ENCODE measurements at regions of chr12 and their contacts with region 1.

Region 1: DNA sequence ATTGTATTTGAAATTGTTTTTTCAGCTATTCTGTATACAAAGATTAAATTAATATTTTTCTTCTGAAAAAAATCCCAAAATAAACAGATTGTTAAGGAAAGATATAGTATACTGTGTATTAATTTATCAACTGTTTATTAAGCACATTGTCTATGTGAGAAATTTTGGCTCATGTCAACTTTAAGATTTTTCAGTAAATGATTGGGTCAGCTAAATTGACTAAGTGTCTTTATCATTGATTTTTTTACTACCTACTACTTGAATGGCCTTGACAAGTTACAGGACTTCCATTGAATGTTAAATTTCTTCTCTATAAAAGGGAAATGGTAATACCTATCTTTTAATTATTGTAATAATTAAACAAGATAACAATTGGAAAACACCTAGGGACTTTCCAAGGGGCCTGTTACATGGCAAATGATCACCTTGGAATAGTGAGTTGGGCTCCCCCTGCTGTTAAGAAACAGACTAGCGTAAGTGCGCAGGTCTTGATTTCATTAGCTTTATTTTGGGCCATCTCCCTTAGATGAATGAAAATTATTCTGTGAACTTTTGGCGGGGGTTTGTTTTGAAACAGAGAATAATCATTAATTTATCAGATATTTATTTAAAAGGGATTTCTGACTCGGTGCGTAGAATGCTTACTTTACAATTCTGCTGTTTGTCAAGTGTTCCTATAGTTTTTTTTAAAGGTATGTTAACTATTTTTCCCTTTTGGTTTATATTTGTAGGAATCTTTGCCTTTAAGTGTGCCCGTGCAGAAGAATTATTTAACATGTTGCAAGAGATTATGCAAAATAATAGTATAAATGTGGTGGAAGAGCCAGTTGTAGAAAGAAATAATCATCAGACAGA is 14.5 kb upstream of the CCT2 start:
- DNase-seq: peak in 36 of 42 donors; percentile 16 to 84 (median 54)

Region 2: DNA sequence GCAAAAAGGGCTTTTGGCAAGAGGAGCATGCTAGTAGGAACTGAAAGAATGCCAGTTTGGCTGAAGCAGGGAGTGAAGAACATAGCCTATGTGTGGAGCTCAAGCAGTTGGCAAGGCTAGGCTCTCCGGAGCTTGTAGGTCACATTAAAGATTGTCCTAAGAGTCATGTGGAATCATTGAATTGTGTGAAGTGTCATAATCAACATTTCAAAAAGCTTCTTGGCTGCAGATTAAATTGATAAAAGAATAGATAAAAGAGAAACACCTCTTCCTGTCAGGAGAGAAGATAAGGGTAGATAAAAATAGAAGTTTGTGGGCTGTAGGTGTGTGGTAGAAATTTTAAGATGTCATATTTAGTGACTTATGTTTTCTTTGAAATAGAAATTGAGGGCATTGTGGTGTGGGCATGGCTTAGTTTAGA is 295.3 kb before region 1 on chr12:
- intact Hi-C with region 1: no loop called
- DNase-seq: peak in 3 of 42 donors; percentile 16 to 51 (median 31)

Region 3: DNA sequence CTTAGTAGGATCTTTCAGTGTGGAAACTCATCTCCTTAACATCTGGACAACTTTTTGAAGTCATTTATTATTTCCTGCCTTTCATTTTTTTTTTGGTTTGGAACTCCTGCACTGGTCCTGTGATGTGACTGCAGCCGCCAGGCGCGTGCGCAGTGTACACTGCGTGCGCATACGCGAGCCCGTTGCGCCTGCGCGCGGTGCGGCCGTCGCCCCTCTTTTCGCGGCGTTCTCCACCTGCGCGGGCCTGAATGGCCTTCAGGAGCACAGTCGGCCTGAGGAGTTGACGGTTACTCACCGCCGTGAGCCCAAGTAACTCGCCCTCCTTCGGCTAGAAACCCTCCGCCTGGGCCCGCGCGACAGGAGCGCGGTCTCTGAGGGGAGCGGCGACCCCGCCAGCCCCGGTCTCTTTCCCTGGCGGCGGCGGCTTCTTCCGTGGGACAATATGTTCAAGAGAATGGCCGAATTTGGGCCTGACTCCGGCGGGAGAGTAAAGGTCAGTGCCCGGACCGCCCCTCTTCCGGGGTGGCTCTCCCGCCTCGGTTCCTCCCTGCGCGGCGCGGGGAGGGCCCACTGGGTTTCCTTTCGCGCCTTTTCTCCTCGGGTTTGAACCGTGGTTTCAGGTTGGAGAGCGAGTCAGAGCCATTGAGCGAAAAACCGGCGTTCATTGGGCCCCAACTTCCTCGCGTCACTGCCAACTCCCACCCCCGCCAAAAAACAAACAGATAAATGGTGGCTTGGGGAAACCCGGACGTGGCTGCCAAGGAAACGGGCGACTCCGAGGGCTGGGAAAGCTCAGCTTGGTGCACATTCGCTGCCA is 211.0 kb before region 1 on chr12 and contains the start of gene YEATS4:
- intact Hi-C with region 1: loop called (anchors 10 kb)
- DNase-seq: peak; percentile 62 to 92 (median 85)

Region 4: GRCh38 chr12:69470189-69471075 is 100.3 kb before region 1 on chr12 and contains the start of gene FRS2:
- intact Hi-C with region 1: loop called (anchors 5 kb)
- DNase-seq: peak; percentile 90 to 99 (median 97)

Measured in head of caudate nucleus (tissue), 42 donors.